H1 (cell line): ENCODE measurements at regions of chr18 and their contacts with region 1.

Region 1: DNA sequence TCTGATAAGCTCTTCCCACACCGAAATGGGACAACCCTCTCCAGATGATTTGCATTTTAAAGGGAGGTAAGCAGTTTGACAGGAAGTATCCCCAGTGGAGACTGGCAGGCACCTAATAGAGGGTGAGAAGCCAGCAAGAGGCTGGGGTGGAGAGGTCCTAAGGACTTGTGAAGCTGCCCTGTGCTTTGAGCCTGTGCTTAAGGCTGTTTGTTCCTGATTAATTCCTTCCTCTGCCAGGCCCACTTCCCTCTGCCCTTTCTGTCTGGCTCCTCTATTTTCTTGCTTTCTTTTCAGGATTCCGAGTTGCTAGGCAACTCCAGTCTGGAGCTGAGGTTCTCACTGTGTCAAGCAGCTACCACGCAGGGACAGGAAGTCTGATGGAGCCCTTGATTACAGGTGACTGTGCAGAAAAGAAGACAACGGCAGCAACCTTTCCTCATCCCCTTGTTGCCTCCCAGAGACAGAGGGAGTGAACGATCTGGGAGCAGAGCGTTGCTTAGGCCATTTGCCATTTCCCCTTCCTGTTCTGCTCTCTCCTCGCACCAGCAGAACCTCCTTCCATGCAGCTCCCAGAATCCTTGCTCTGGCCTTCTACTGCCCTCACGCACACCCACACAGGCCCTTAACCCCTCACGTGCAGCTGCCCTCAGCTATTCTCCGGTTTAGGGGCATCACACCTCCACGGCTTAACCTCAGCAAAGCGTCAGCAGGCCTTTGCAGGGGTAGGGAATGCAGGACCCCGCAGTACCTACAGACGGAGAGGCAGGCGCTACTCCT is 103.6 kb upstream of the CELF4 start:
- DNase-seq: no peak
- H3K4me3 ChIP-seq: no peak overlapping the region
- H3K27ac ChIP-seq: no peak overlapping the region
- H3K4me1 ChIP-seq: peaks cover 4 to 11% (median 5%) of the 10 kb centered on the region in 4 experiments; a peak in 6 of 7 replicates
- H3K27me3 ChIP-seq: no peaks in the 10 kb centered on the region
- CTCF ChIP-seq: no peak
- EP300 ChIP-seq: no peak
- POLR2A ChIP-seq: no peak
- RAD21 ChIP-seq: no peak

Region 2: DNA sequence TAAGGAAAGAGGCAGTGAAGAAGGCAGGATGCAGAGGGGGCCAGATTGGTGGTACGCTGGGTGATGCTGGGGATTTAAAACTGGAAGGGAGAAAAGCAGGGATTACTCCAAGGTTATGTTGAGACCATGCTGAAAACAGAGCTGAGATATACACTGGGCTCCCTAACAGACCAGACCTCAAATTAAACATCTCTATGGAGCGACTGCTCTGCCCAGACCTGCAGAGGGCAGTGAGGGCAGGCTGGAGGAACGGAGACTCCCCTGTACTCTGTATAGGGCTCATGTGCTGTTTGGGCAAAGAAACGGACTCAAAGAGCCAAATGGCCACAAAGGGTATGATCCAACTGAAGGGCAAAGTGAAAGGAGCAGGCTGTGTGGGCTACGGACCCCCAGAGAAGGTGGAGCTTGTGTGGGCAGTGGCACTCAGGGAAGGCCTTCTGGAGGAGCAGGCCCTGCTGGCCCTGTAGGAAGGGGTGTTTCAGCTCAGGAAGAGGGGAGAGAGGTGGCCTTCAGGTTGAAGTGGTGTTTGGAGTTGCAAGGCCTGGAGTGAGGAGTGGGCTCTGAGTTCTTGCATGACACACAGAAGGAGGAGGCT is 98.7 kb before region 1 on chr18:
- CTCF ChIA-PET with region 1: interaction called, 11 read pairs
- POLR2A ChIA-PET with region 1: no interaction called
- DNase-seq: no peak
- H3K4me3 ChIP-seq: no peak overlapping the region
- H3K27ac ChIP-seq: no peak overlapping the region
- H3K4me1 ChIP-seq: peaks cover 0 to 14% (median 4%) of the 10 kb centered on the region in 4 experiments; a peak in 4 of 7 replicates
- H3K27me3 ChIP-seq: peaks cover 27 to 47% (median 42%) of the 10 kb centered on the region in 4 experiments
- CTCF ChIP-seq: peak; percentile 66 to 75 (median 70)
- EP300 ChIP-seq: no peak
- POLR2A ChIP-seq: no peak
- RAD21 ChIP-seq: peak; percentile 74 to 81

Region 3: DNA sequence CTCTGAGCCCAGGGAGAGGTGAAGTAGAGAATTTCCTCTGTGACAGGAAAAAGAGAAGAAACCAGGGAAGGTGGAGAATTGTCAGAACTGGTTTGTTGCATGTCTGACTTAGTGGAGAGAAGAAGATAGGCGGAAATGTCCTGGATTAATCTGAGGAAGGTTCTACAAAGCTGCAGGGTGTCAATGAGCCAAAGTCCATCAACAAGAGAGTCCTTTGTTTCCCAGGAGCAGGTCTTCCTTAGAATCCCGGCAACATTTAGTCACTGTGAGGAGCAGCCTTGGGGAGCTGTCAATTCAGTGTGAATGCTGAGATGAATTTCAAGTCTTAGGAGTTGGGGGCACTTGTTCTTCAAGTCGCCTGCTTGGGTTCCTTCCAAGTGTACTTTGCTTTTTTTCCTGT is 15.1 kb before region 1 on chr18:
- CTCF ChIA-PET with region 1: interaction called, 13 read pairs
- POLR2A ChIA-PET with region 1: interaction called, 3 read pairs
- DNase-seq: no peak
- H3K4me3 ChIP-seq: no peak overlapping the region
- H3K27ac ChIP-seq: no peak overlapping the region
- H3K4me1 ChIP-seq: peaks cover 0 to 6% (median 0%) of the 10 kb centered on the region in 4 experiments; a peak in 1 of 7 replicates
- H3K27me3 ChIP-seq: no peaks in the 10 kb centered on the region
- CTCF ChIP-seq: no peak
- EP300 ChIP-seq: no peak
- POLR2A ChIP-seq: no peak
- RAD21 ChIP-seq: no peak